Activated CD4-positive, alpha-beta T cell treated with anti-CD3 and anti-CD28 coated beads, Interleukin-2, amount 10 ng/mL, durations not matched to agents 24 days and 14 days (primary cell): ENCODE measurements at regions of chr2 and their contacts with region 1.

Region 1: GRCh38 chr2:120231974-120232635 is 8.9 kb upstream of the TMEM185B start:
- DNase-seq: peak; percentile 95
- H3K4me3 Mint-ChIP-seq: peak overlapping the region; percentile 98
- H3K27ac Mint-ChIP-seq: peak overlapping the region; percentile 99
- H3K4me1 Mint-ChIP-seq: peaks cover 61% of the 10 kb centered on the region
- H3K27me3 Mint-ChIP-seq: no peaks in the 10 kb centered on the region

Region 2: DNA sequence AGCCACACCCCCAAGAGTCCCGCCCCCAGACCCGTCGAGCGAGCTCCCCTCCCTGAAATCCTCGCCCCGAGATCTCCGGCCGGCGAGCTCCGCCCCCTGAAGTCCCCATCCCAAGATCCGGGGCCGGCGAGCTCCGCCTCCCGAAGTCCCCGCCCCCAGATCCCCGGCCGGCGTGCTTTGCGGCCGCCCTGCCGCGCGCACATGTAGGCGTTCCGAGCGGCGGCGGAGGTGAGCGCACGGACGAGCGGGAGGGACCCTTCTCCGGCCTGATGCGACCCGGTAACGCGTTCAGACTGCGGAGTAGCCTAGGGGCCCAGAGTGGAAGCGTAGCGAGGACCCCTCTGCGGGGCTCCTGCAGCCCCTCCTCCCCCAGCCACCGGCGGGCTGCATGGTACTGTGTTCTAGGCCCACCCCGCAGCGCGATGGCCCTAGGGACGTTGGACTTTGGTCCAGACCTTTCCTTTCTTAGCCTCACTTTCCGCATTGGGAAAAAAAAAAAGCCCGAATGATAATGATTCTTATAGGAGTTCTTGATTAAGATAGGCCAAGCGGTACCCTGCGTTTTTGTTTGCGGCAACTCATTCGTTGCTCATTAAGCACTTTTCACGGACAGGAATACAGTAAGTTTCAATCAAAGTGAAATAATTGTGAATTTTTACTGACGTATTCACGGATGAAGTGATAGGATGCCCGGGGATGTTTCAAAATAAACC is 553.0 kb before region 1 on chr2 and contains the start of gene TMEM177:
- intact Hi-C with region 1: loop called (anchors 5 kb)
- DNase-seq: peak; percentile 98
- H3K4me3 Mint-ChIP-seq: peak within 1 kb of the TSS; percentile 87
- H3K27ac Mint-ChIP-seq: peak within 1 kb of the TSS; percentile 76
- H3K4me1 Mint-ChIP-seq: peaks cover 31% of the 10 kb centered on the region
- H3K27me3 Mint-ChIP-seq: peaks cover 12% of the 10 kb centered on the region
- total RNA-seq, gene TMEM177: 19.0 and 20.6 TPM in 2 replicates

Region 3: GRCh38 chr2:120012771-120013596 is 219.1 kb before region 1 on chr2 and contains the start of gene EPB41L5:
- intact Hi-C with region 1: loop called (anchors 5 kb)
- DNase-seq: peak; percentile 94
- H3K4me3 Mint-ChIP-seq: peak within 1 kb of the TSS; percentile 75
- H3K27ac Mint-ChIP-seq: no peak within 1 kb of the TSS
- H3K4me1 Mint-ChIP-seq: peaks cover 11% of the 10 kb centered on the region
- H3K27me3 Mint-ChIP-seq: peaks cover 13% of the 10 kb centered on the region
- total RNA-seq, gene EPB41L5: 1.5 and 2.2 TPM in 2 replicates

Region 4: DNA sequence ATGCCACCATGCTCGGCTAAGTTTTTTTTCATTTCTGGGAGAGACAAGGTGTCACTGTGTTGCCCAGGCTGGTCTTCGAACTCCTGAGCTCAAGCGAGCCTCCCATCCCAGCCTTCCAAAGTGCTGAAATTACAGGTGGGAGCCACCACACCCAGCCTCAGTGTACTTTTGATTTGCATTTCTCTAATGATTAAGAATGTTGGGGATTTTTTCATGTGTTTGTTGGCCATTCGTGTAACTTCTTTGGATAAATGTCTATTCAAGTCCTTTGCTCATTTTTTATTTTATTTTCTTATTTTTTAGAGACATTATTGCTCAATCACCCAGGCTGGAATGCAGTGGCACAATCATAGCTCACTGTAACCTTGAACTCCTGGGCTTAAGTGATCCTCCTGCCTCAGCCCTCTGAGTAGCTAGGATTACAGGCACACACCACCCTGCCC is 82.0 kb before region 1 on chr2:
- intact Hi-C with region 1: no loop called
- DNase-seq: no peak
- H3K4me3 Mint-ChIP-seq: no peak overlapping the region
- H3K27ac Mint-ChIP-seq: no peak overlapping the region
- H3K4me1 Mint-ChIP-seq: no peaks in the 10 kb centered on the region
- H3K27me3 Mint-ChIP-seq: no peaks in the 10 kb centered on the region

Region 5: GRCh38 chr2:120252225-120253021 is 20.3 kb after region 1 on chr2 and contains the start of gene RALB:
- intact Hi-C with region 1: loop called (anchors 1 kb)
- DNase-seq: peak; percentile 100
- H3K4me3 Mint-ChIP-seq: peak within 1 kb of the TSS; percentile 99
- H3K27ac Mint-ChIP-seq: peak within 1 kb of the TSS; percentile 96
- H3K4me1 Mint-ChIP-seq: peaks cover 70% of the 10 kb centered on the region
- H3K27me3 Mint-ChIP-seq: peaks cover 4% of the 10 kb centered on the region
- total RNA-seq, gene RALB: 72.1 and 80.0 TPM in 2 replicates

Region 6: DNA sequence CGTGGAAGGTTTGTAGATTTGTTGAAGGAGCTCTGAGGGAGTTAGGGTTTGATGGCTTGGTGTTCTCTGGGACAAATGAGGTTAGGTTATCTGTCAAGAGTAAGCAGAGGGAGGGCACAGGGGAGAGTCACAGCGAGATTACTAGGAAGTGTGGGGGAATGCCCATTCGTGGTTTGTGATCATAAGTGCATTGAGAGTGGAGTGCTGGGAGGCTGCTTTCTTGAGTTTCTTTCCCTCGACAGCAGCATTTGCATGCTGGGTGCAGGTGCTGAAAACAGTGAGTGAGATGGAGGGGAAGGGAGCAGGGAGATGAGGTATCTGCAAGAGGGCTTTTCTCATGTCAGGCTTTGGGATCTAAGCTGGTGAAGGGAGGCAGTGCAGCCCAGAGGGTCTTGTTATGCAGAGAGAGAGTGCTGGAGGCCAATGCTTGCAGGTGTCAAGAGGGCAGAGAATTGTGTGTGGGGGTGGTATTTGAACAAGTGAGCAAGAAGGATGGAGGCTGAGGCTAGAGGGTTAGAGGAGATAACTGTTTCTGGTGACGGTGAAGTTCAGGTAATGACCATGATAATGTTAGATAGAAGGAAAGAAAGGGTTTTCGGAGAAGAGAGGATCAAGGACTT is 29.4 kb after region 1 on chr2:
- intact Hi-C with region 1: loop called (anchors 2 kb)
- DNase-seq: peak; percentile 87
- H3K4me3 Mint-ChIP-seq: no peak overlapping the region
- H3K27ac Mint-ChIP-seq: no peak overlapping the region
- H3K4me1 Mint-ChIP-seq: peaks cover 32% of the 10 kb centered on the region
- H3K27me3 Mint-ChIP-seq: no peaks in the 10 kb centered on the region

Region 7: DNA sequence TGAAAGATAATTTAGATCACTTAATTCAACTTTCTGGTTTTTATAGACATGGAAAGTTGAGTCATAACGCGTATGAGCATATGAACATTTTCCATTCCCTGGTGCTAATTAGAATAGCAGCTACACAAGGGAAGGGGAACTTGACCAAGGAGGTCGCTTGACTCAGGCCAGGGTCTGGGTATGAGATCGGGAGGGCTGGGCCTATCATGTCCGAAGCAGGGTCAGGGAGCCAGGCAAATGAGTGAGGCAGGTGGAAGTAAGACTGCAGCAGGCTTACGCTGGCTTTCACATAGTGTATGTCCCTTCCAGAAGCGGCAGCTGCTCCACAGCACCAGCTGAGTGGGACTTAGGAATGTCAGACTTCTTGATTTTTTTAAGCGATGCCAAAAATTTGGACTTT is 35.2 kb after region 1 on chr2:
- intact Hi-C with region 1: loop called (anchors 1 kb)
- DNase-seq: no peak
- H3K4me3 Mint-ChIP-seq: peak overlapping the region; percentile 41
- H3K27ac Mint-ChIP-seq: peak overlapping the region; percentile 93
- H3K4me1 Mint-ChIP-seq: peaks cover 52% of the 10 kb centered on the region
- H3K27me3 Mint-ChIP-seq: no peaks in the 10 kb centered on the region

Region 8: GRCh38 chr2:120287183-120288015 is 55.3 kb after region 1 on chr2:
- intact Hi-C with region 1: loop called (anchors 1 kb)
- DNase-seq: peak; percentile 73
- H3K4me3 Mint-ChIP-seq: peak overlapping the region; percentile 66
- H3K27ac Mint-ChIP-seq: peak overlapping the region; percentile 89
- H3K4me1 Mint-ChIP-seq: peaks cover 63% of the 10 kb centered on the region
- H3K27me3 Mint-ChIP-seq: no peaks in the 10 kb centered on the region